Colonic mucosa (tissue), 4 donors: ENCODE measurements at regions of chr4 and their contacts with region 1.

Region 1: DNA sequence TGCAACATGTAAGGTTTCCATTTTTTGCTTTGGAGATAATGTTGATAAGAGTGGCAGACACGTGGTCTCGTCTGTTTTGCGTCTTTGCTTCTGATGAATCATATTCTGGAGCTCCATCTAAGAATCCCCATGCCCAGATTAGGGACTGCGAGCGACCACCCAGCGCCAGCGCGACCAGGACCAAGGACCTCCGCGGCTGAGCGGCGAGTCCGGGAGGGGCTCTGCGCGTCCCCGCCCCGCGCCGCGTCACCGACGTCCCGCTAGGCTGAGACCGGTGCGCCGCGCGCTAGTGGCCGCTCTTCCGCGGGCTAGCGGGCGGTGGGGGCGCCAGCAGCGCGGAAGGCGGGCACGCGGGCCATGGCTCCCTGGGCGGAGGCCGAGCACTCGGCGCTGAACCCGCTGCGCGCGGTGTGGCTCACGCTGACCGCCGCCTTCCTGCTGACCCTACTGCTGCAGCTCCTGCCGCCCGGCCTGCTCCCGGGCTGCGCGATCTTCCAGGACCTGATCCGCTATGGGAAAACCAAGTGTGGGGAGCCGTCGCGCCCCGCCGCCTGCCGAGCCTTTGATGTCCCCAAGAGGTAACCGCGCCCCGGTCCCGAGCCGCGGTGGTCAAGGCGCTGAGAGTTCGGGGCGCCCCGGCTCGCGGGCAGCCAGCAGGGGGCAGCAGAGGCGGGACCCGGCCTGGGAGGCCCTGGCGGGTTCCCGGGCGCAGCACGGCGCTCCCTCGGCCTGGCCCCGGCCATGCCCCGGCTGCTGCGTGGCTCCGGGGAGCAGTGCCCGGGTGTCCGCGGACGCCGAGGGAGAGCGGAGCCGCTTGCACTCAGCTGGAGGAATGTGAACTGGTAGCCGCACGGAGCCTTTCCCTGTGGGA is at the start of gene SRD5A3:
- DNase-seq: peak; percentile 89
- H3K4me3 ChIP-seq: peak within 1 kb of the TSS; percentile 73
- H3K27ac ChIP-seq: peak within 1 kb of the TSS; percentile 97
- H3K4me1 ChIP-seq: no peaks in the 10 kb centered on the region
- H3K27me3 ChIP-seq: no peaks in the 10 kb centered on the region
- CTCF ChIP-seq: peak; percentile 96
- total RNA-seq, gene SRD5A3: 18.8 to 22.2 TPM

Region 2: GRCh38 chr4:55395529-55396307 is 49.5 kb after region 1 on chr4 and contains the start of gene TMEM165:
- intact Hi-C with region 1: loop called (anchors 5 kb)
- DNase-seq: peak; percentile 96
- H3K4me3 ChIP-seq: peak within 1 kb of the TSS; percentile 97
- H3K27ac ChIP-seq: peak within 1 kb of the TSS; percentile 100
- H3K4me1 ChIP-seq: peaks cover 9% of the 10 kb centered on the region
- H3K27me3 ChIP-seq: no peaks in the 10 kb centered on the region
- CTCF ChIP-seq: no peak
- total RNA-seq, gene TMEM165: 70.0 to 80.0 TPM

Region 3: DNA sequence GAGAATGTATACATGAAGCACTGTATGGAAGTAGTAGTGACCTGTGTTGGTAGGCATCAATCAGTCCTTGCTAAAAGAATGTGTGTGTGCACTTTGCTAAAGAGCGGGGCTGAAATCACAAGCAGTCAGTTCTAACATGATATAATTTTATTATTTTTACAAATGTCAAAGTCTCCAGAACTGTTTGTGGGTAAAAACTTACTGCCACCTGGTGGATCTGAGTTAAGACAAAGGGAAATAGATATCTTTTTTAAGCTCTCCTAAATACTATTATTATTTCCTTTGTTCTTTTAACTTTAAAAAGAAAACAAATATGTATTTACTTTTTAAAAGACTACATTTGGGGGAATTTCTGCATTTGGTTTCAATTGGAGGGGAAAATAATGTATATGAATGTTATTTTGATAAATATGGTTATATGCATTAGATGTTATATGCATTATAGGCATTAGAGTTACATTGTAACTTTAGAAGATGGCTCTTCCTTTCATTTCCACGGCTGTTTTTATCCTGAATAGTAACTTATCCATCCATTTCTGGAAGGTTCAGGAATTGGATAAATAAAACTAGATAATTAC is 208.3 kb after region 1 on chr4:
- intact Hi-C with region 1: loop called (anchors 10 kb)
- DNase-seq: no peak
- H3K4me3 ChIP-seq: no peak overlapping the region
- H3K27ac ChIP-seq: no peak overlapping the region
- H3K4me1 ChIP-seq: no peaks in the 10 kb centered on the region
- H3K27me3 ChIP-seq: no peaks in the 10 kb centered on the region
- CTCF ChIP-seq: peak; percentile 39

Region 4: DNA sequence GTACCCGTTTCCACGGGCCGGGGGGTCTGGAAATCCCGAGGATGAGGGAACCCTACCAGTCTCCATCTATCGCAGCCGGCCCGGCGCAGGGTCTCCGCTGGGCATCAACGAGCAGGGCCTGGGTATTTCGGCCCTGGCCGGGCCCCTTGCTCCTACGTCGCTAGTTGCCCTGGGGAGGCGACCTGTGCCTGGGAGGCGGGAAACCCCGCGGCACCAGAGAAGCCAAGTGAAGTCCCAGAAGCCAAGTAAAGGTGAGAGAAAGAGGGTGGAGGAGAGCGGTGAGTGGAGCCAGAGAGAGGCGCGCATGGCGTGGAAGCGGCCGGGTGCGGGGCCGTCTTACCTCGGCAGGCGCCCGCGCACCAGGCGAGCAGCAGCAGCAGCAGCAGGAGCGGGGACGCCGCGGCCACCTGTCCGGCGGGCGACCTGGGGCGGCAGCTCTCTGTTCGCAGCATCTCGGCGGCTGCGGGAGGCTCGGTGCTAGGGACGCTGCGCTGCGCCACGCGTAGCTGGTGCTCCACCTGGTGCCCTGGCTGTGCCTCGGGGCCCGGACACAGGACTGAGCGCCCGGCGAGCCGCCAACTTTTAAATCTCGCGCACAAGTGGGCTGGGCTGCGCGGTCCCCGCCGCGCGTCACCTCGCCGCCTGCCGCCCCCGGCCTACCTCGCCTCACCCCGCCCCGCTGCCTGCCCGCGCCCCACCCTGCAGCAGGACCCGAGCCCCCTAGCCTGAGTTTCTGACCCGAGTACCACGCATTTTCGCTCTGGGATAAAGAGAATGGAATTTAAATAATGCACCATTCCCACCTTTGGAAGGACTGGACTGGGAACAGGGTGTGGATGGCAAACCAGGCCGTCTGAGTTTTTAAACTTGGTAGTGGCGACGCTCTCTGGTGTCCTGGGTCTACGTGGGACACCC is 289.8 kb after region 1 on chr4 and contains the start of gene NMU:
- intact Hi-C with region 1: loop called (anchors 10 kb)
- DNase-seq: peak; percentile 57
- H3K4me3 ChIP-seq: peak within 1 kb of the TSS; percentile 30
- H3K27ac ChIP-seq: no peak within 1 kb of the TSS
- H3K4me1 ChIP-seq: no peaks in the 10 kb centered on the region
- H3K27me3 ChIP-seq: peaks cover 27% of the 10 kb centered on the region
- CTCF ChIP-seq: no peak
- total RNA-seq, gene NMU: 0.66 to 1.9 TPM